Adrenal gland (tissue), 19 donors: ENCODE measurements at regions of chr7 and their contacts with region 1.

Region 1: DNA sequence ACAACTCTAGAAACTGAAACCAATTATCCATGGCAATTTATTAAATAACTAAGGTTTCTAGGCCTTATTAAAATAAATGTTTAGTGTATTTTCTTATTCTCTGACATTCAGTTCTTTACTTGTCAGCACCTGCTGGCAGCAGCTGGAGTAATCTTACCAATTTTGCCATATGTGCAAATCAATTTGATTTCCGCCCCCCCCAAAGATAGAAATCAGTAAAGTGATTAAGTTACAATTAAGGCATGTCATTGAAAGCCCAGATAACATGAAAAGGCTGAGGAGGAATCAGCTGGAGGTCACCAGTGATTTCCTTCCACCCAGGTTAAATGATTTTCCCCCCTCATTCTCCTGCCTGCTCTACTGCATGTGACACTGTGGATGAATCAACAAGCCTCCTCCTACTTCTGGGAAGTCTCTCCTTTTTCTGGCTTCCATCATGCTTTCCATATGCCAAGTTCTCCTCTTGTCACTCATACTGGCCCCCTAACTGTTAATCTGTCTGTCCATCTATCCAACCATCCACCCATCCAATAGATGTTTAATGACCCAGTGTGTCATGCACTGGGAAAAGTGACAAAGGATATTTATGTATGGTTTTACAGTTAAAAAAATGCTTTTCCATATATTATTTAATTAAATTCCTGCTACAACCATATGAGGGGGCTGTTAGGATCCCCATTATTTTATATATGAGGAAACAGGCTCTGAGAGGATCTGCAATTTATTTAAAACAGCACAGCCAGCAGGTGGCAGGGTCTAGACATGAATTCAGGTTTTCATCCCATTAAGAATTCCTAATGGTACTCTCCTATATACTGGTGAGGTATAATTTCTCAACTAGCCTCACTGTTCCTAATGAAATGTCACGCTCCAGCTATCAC is 116.5 kb downstream of the ATXN7L1 start:
- DNase-seq: peak; percentile 38 to 77 (median 55)
- H3K4me3 ChIP-seq: no peak overlapping the region
- H3K27ac ChIP-seq: no peak overlapping the region
- H3K4me1 ChIP-seq: no peaks in the 10 kb centered on the region
- H3K27me3 ChIP-seq: no peaks in the 10 kb centered on the region
- CTCF ChIP-seq: peak; percentile 45 to 74 (median 68)
- POLR2A ChIP-seq: no peak

Region 2: GRCh38 chr7:105652359-105652993 is 107.4 kb before region 1 on chr7:
- intact Hi-C with region 1: loop called (anchors 10 kb)
- DNase-seq: peak; percentile 71 to 93 (median 87)
- H3K4me3 ChIP-seq: no peak overlapping the region
- H3K27ac ChIP-seq: no peak overlapping the region
- H3K4me1 ChIP-seq: peaks cover 0 to 19% of the 10 kb centered on the region in 2 donors
- H3K27me3 ChIP-seq: no peaks in the 10 kb centered on the region
- CTCF ChIP-seq: peak; percentile 74 to 93 (median 87)
- POLR2A ChIP-seq: no peak

Region 3: DNA sequence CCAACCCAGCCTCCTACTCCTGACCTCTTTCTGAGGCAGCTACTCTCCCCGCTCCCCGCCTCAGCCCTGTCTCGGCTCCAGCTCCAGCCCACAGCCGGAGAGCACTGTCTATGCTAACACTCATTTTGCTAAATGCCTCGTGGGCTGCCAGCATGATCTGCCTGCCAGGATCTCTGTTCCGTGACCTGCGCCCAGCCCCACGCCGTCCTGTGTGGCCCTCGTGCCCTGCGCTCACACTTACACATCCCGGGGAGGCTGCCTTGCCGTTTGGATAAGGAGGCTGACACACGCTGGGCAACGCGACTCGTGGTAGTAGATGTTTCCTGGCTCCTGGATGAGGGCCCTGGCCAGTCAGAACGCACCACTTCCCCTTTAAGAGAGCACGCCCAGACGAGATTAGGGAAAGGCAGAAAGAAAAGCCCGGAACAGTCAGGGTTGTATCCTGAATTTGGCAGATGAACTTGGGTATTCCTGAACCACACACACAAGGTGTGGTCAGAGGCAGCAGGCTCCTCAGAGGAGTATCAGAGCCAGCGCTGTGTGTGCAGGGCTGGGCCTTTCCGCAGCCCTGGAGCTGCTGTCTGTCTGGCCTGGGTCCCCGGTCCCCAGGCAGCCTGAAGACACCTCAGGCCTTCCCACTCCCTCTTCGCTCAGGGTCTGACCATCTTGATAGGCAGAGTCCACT is 81.0 kb before region 1 on chr7:
- intact Hi-C with region 1: no loop called
- DNase-seq: peak; percentile 29 to 81 (median 56)
- H3K4me3 ChIP-seq: no peak overlapping the region
- H3K27ac ChIP-seq: peak overlapping the region in 3 of 5 donors; percentile 35 to 54 (median 52)
- H3K4me1 ChIP-seq: peaks cover 18 to 58% of the 10 kb centered on the region in 2 donors
- H3K27me3 ChIP-seq: no peaks in the 10 kb centered on the region
- CTCF ChIP-seq: no peak
- POLR2A ChIP-seq: no peak

Region 4: GRCh38 chr7:105830391-105831301 is 70.7 kb after region 1 on chr7:
- intact Hi-C with region 1: loop called in 1 of 2 experiments (anchors 5 kb)
- DNase-seq: peak in 6 of 7 donors; percentile 36 to 78 (median 56)
- H3K4me3 ChIP-seq: no peak overlapping the region
- H3K27ac ChIP-seq: peak overlapping the region in 4 of 5 donors; percentile 0 to 75 (median 48)
- H3K4me1 ChIP-seq: peaks cover 15 to 18% of the 10 kb centered on the region in 2 donors
- H3K27me3 ChIP-seq: no peaks in the 10 kb centered on the region
- CTCF ChIP-seq: no peak
- POLR2A ChIP-seq: no peak

Region 5: GRCh38 chr7:105876091-105876963 is 116.4 kb after region 1 on chr7 and contains the start of gene ATXN7L1:
- intact Hi-C with region 1: loop called (anchors 5 to 10 kb)
- DNase-seq: peak; percentile 96 to 98 (median 97)
- H3K4me3 ChIP-seq: peak within 1 kb of the TSS in 3 of 4 donors; percentile 26 to 72 (median 69)
- H3K27ac ChIP-seq: peak within 1 kb of the TSS; percentile 34 to 96 (median 89)
- H3K4me1 ChIP-seq: peaks cover 16 to 20% of the 10 kb centered on the region in 2 donors
- H3K27me3 ChIP-seq: no peaks in the 10 kb centered on the region
- CTCF ChIP-seq: peak in 4 of 6 experiments; percentile 16 to 93 (median 68)
- POLR2A ChIP-seq: peak in 1 of 2 donors; percentile 94
- total RNA-seq, gene ATXN7L1: 3.6 to 24.6 (median 12.8) TPM

Region 6: GRCh38 chr7:105906695-105907094 is 146.8 kb after region 1 on chr7:
- intact Hi-C with region 1: no loop called
- DNase-seq: no peak
- H3K4me3 ChIP-seq: no peak overlapping the region
- H3K27ac ChIP-seq: no peak overlapping the region
- H3K4me1 ChIP-seq: no peaks in the 10 kb centered on the region
- H3K27me3 ChIP-seq: no peaks in the 10 kb centered on the region
- CTCF ChIP-seq: no peak
- POLR2A ChIP-seq: no peak

Region 7: GRCh38 chr7:106009403-106010226 is 249.7 kb after region 1 on chr7:
- intact Hi-C with region 1: loop called (anchors 5 kb)
- DNase-seq: peak; percentile 85 to 93 (median 91)
- H3K4me3 ChIP-seq: peak overlapping the region in 1 of 4 donors; percentile 43
- H3K27ac ChIP-seq: peak overlapping the region; percentile 12 to 83 (median 53)
- H3K4me1 ChIP-seq: peaks cover 3 to 18% of the 10 kb centered on the region in 2 donors
- H3K27me3 ChIP-seq: no peaks in the 10 kb centered on the region
- CTCF ChIP-seq: peak; percentile 86 to 98 (median 94)
- POLR2A ChIP-seq: peak in 1 of 2 donors; percentile 65

Region 8: GRCh38 chr7:106041140-106041717 is 281.3 kb after region 1 on chr7:
- intact Hi-C with region 1: loop called (anchors 5 kb)
- DNase-seq: peak in 5 of 7 donors; percentile 27 to 61 (median 50)
- H3K4me3 ChIP-seq: no peak overlapping the region
- H3K27ac ChIP-seq: no peak overlapping the region
- H3K4me1 ChIP-seq: peaks cover 4 to 7% of the 10 kb centered on the region in 2 donors
- H3K27me3 ChIP-seq: no peaks in the 10 kb centered on the region
- CTCF ChIP-seq: peak; percentile 43 to 65 (median 56)
- POLR2A ChIP-seq: no peak